ENCODE measurements at regions of chr9 and their contacts with region 1.

Region 1: DNA sequence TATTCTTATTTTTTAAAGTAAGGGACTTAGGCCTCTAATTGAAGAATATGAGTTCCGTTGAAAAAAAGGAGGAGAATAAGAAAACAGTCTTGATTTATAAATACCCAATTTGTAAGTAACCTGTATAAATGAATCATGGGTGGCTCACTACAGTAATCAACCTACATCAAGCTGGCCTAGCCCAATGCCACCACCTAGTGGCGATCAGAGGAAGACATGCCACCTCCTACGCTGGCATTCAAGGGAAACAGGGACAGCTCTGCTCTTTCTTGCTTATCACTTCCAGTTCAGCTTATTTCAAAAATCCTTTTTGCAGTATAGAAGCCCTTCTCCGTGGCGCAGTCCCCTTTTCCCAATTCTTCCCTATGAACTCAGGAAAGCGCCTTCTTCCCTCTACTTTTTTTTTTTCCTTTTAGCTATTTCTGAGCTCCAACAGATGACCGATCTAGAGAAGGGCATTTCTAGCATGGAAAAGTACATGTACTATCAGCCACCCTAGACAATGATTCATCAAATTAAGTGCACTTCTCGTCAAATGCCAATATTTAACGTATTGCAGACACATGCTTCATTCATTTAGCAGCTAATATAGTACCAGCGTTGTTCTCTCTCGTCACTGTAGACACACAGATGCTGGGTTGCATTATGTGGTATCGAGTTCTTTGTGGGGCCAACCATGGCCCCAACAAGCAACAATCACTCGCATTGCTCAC is 28.3 kb downstream of the PTPN3 start:
- DNase-seq: peak in 7 of 9 experiments; percentile 17 to 60 (median 43)
- ATAC-seq: no peak
- H3K4me3 ChIP-seq: no peak overlapping the region
- H3K4me3 Mint-ChIP-seq: no peak overlapping the region
- H3K27ac ChIP-seq: no peak overlapping the region
- H3K27ac Mint-ChIP-seq: no peak overlapping the region
- H3K4me1 ChIP-seq: no peaks in the 10 kb centered on the region
- H3K4me1 Mint-ChIP-seq: no peaks in the 10 kb centered on the region
- H3K27me3 ChIP-seq: no peaks in the 10 kb centered on the region
- H3K27me3 Mint-ChIP-seq: peaks cover 6% of the 10 kb centered on the region
- CTCF ChIP-seq: peak; percentile 58

Region 2: DNA sequence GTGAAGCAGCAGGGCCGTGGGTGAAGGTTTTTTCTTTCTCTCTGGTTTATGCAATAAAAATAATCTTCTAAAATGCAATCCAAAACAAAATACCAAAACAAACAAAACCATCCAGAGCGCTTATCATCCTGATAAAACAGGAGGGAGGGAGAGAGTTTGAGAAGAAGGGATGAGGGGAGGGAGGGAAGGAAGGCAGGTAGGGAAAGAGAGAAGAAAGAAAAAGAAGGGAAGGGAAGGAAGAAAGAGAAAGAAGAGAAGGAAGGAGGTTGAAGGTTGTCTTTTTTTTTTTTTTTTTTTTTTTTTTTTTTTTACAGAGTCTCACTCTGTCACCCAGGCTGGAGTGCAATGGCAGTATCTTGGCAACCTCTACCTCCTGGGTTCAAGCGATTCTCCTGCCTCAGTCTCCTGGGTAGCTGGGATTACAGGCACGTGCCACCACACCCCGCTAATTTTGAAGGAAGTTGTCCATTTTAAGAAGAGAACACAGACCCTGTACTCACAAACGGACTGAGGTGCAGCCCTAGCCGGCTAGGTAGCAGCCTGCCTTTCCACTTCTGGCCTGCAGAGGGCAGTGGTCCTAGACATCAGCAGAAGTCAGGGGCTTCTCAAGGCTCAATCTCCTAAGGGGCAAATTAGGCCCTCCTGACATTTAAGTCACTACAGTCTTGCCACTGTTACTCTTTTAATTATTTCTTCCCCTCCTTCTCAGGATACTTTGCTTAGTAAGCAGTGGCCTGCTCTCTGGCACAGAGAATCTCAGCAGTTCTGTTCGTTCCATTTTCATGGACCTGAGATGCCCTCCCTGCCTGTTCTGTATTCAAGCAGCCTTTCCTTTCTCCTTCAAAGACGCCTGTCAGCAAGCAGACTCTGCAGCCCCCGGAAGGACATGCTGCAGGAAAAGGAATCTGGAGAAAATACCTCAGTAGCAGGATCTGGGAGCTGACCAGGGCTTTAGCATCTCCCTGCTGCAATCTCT is 225.4 kb before region 1 on chr9:
- CTCF ChIA-PET with region 1: no interaction called
- POLR2A ChIA-PET with region 1: no interaction called
- intact Hi-C with region 1: loop called in 1 of 2 experiments (anchors 5 kb)
- DNase-seq: peak; percentile 32 to 74 (median 60)
- ATAC-seq: peak; percentile 56
- H3K4me3 ChIP-seq: no peak overlapping the region
- H3K4me3 Mint-ChIP-seq: no peak overlapping the region
- H3K27ac ChIP-seq: no peak overlapping the region
- H3K27ac Mint-ChIP-seq: no peak overlapping the region
- H3K4me1 ChIP-seq: no peaks in the 10 kb centered on the region
- H3K4me1 Mint-ChIP-seq: peaks cover 5% of the 10 kb centered on the region
- H3K27me3 ChIP-seq: peaks cover 0 to 4% of the 10 kb centered on the region in 2 experiments
- H3K27me3 Mint-ChIP-seq: peaks cover 15% of the 10 kb centered on the region
- CTCF ChIP-seq: peak; percentile 86

Region 3: GRCh38 chr9:109440797-109441287 is 29.0 kb before region 1 on chr9:
- CTCF ChIA-PET with region 1: interaction called, 10 read pairs
- POLR2A ChIA-PET with region 1: no interaction called
- intact Hi-C with region 1: no loop called
- DNase-seq: peak in 6 of 9 experiments; percentile 2 to 56 (median 27)
- ATAC-seq: peak; percentile 82
- H3K4me3 ChIP-seq: no peak overlapping the region
- H3K4me3 Mint-ChIP-seq: no peak overlapping the region
- H3K27ac ChIP-seq: no peak overlapping the region
- H3K27ac Mint-ChIP-seq: no peak overlapping the region
- H3K4me1 ChIP-seq: peaks cover 8% of the 10 kb centered on the region
- H3K4me1 Mint-ChIP-seq: peaks cover 12% of the 10 kb centered on the region
- H3K27me3 ChIP-seq: no peaks in the 10 kb centered on the region
- H3K27me3 Mint-ChIP-seq: peaks cover 7% of the 10 kb centered on the region
- CTCF ChIP-seq: peak; percentile 53

Region 4: GRCh38 chr9:109459423-109459822 is 10.4 kb before region 1 on chr9:
- CTCF ChIA-PET with region 1: interaction called, 10 read pairs
- POLR2A ChIA-PET with region 1: no interaction called
- intact Hi-C with region 1: no loop called
- DNase-seq: no peak
- ATAC-seq: no peak
- H3K4me3 ChIP-seq: no peak overlapping the region
- H3K4me3 Mint-ChIP-seq: no peak overlapping the region
- H3K27ac ChIP-seq: no peak overlapping the region
- H3K27ac Mint-ChIP-seq: no peak overlapping the region
- H3K4me1 ChIP-seq: no peaks in the 10 kb centered on the region
- H3K4me1 Mint-ChIP-seq: no peaks in the 10 kb centered on the region
- H3K27me3 ChIP-seq: no peaks in the 10 kb centered on the region
- H3K27me3 Mint-ChIP-seq: peaks cover 3% of the 10 kb centered on the region
- CTCF ChIP-seq: no peak

Measured in CD8-positive, alpha-beta T cell (primary cell).